Activated T-helper 1 cell treated with anti-CD3 and anti-CD28 coated beads, Interleukin-12 subunit alpha, Interleukin-12 subunit beta, Interleukin-2, Interleukin-4 antibody, amounts not matched to agents 30 ng/mL and 10 ng/mL and 1 ng/mL, durations not matched to agents 14 hours and 24 hours and 36 hours (primary cell): ENCODE measurements at regions of chr6 and their contacts with region 1.

Region 1: DNA sequence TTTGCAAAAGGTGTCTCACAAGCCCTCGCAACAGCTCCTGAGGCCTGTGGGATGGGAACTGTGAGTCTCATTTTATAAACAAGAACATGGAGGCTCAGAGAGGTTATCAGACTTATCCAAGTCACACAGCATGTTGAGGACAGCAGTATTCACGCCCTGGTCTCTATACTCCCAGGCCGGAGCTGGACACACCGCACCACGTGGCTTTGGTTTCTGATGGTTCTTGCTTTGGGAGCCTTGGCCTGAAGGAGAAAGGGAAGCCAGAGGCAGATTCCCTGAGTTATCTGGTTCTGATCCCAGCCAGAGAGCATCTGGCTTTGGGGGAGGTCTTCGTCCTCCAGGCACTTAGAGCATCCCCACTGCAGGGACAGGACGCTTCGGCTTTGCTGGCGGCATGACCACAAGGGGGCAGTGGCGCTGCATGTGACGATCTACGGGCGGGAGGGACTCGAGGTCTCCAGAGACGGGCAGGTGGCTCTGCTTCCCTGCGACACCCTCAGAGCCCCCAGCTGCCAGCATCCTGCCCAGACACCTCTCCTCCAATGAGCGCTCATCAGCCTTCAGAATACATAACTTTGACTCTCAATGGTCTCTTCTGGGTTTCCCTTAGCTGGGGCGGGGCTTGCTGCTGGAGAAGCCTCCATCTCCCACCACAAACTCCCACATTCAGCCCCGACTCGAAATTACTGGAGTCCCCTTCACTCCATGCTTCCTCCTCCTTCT is 51.4 kb upstream of the SAYSD1 start:
- DNase-seq: peak; percentile 71
- H3K4me3 Mint-ChIP-seq: no peak overlapping the region
- H3K27ac Mint-ChIP-seq: no peak overlapping the region
- H3K4me1 Mint-ChIP-seq: peaks cover 6% of the 10 kb centered on the region
- H3K27me3 Mint-ChIP-seq: peaks cover 3% of the 10 kb centered on the region

Region 2: GRCh38 chr6:38871741-38872568 is 294.4 kb before region 1 on chr6:
- intact Hi-C with region 1: loop called (anchors 2 kb)
- DNase-seq: peak; percentile 36
- H3K4me3 Mint-ChIP-seq: no peak overlapping the region
- H3K27ac Mint-ChIP-seq: no peak overlapping the region
- H3K4me1 Mint-ChIP-seq: peaks cover 37% of the 10 kb centered on the region
- H3K27me3 Mint-ChIP-seq: peaks cover 6% of the 10 kb centered on the region

Region 3: GRCh38 chr6:38997128-38997761 is 169.1 kb before region 1 on chr6:
- intact Hi-C with region 1: loop called (anchors 1 kb)
- DNase-seq: no peak
- H3K4me3 Mint-ChIP-seq: no peak overlapping the region
- H3K27ac Mint-ChIP-seq: no peak overlapping the region
- H3K4me1 Mint-ChIP-seq: no peaks in the 10 kb centered on the region
- H3K27me3 Mint-ChIP-seq: peaks cover 20% of the 10 kb centered on the region

Region 4: GRCh38 chr6:39088331-39088730 is 78.0 kb before region 1 on chr6:
- intact Hi-C with region 1: loop called (anchors 1 kb)
- DNase-seq: no peak
- H3K4me3 Mint-ChIP-seq: no peak overlapping the region
- H3K27ac Mint-ChIP-seq: no peak overlapping the region
- H3K4me1 Mint-ChIP-seq: peaks cover 24% of the 10 kb centered on the region
- H3K27me3 Mint-ChIP-seq: peaks cover 55% of the 10 kb centered on the region

Region 5: DNA sequence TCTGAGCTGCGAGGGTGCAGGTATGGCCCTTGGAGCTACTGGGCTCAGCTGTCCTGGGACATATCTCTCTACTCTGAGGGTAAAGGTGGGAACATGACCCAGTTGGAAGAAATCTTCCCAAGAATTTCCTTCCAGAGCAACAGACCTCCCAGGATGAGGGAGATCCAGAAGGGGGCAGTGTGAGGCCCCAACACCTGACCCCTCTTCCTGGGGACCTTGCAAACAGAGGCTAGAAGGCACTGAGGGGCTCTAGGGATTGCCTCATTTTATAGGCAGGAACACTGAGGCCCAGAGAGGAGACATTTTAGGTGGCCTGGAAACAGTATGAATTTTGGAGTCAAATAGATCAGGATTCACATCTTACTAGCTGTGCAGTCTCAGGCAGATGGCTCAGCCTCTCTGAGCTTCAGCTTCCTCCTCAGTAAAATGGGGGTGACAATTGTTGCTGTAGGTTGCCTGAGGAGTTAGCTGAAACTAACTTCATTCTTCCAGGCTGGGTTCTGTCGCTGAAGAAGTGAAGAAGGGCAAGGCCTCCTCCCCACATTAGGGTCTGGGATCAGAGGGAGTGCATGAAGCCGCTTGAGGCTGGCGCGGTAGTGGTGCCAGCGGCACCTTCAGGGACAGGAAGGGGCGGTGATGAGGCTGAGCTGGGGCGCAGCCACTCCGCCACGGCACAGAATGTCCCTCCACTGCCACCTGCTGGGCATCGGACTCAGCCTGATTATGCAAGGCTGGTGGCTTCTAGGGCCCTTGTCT is 136.5 kb after region 1 on chr6:
- intact Hi-C with region 1: loop called (anchors 1 kb)
- DNase-seq: peak; percentile 76
- H3K4me3 Mint-ChIP-seq: peak overlapping the region; percentile 66
- H3K27ac Mint-ChIP-seq: no peak overlapping the region
- H3K4me1 Mint-ChIP-seq: peaks cover 13% of the 10 kb centered on the region
- H3K27me3 Mint-ChIP-seq: peaks cover 1% of the 10 kb centered on the region